ENCODE measurements at regions of chr6 and their contacts with region 1.

Region 1: DNA sequence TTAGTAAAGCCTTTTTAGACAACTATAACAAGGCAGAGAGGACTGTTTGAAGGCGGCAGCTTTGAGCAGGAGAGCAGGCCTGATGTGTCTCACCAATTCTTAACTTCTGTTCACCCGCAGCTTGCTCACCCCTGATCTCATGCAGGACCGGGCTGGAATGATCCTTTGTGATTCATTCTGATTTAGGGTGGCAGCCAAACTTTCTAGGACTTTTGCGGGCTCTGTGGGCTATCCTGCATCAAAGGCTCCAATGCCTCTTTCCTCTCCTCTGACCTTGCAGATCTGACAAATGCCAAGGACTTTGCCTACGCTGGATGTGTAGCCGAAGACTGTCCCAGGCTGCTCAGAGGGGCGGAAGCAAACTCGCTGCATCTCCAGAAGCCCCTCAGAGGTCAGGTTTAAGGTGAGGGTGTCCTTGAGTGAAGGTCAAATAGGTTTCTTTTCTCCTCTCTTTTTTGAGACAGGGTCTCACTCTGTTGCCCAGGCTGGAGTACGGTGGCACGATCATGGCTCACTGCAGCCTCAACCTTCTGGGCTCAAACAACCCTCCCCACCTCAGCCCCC is 72.3 kb downstream of the VEGFA start:
- DNase-seq: no peak
- ATAC-seq: no peak

Region 2: DNA sequence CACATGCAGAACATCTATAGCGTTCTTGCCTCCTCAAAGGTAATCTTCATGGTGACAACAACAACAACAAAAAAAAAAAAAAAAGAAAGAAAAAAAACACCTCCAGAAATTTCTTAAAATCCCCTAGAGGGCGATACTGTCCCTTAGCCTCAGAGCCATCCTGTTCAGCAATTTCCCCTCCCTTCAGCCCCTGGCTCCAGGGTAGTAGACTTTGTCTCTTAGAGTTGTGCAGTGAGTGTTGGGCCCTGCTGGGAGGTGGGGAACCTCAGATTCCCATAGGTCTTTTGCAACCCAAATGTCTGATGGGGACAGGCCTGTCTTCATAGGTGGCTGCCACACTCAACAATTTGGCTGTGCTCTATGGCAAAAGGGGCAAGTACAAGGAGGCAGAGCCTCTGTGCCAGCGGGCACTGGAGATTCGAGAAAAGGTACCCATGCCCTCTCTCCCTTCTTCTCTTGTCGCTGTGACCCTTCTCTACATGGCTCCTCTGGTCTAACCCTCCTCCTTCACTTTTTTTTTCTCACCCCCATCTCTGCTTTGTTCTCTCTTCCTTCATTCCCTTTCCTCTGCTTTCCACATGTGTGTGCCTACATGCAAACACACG is 772.2 kb before region 1 on chr6:
- intact Hi-C with region 1: no loop called
- DNase-seq: no peak
- ATAC-seq: peak; percentile 41 to 60

Region 3: DNA sequence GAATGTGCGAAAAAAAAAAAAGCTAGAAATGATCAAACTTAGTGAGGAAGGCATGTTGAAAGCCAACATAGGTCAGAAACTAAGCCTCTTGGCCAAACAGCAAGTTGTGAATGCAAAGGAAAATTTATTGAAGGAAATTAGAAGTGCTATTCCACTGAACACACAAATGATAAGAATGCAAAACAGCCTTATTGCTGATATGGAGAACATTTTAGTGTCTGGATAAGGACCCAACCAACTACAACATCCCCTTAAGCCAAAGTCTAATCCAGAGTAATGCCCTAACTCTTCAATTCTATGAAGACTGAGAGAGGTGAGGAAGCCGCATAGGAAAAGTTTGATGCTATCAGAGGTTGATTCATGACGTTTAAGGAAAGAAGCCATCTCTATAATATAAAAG is 420.5 kb before region 1 on chr6:
- intact Hi-C with region 1: no loop called
- DNase-seq: no peak
- ATAC-seq: no peak

Region 4: GRCh38 chr6:43657221-43657802 is 185.0 kb before region 1 on chr6:
- intact Hi-C with region 1: loop called in 1 of 2 experiments (anchors 10 kb)
- DNase-seq: no peak
- ATAC-seq: no peak

Measured in left cardiac atrium (tissue), 4 donors.